Left lung (tissue), 14 donors: ENCODE measurements at regions of chr17 and their contacts with region 1.

Region 1: GRCh38 chr17:62692721-62693483 is 65.4 kb downstream of the MRC2 start:
- DNase-seq: peak in 1 of 4 donors; percentile 65
- ATAC-seq: peak; percentile 39
- H3K4me3 ChIP-seq: no peak overlapping the region
- H3K27ac ChIP-seq: no peak overlapping the region
- H3K4me1 ChIP-seq: peaks cover 0 to 10% of the 10 kb centered on the region in 2 donors
- H3K27me3 ChIP-seq: no peaks in the 10 kb centered on the region
- CTCF ChIP-seq: peak in 1 of 2 donors; percentile 24

Region 2: DNA sequence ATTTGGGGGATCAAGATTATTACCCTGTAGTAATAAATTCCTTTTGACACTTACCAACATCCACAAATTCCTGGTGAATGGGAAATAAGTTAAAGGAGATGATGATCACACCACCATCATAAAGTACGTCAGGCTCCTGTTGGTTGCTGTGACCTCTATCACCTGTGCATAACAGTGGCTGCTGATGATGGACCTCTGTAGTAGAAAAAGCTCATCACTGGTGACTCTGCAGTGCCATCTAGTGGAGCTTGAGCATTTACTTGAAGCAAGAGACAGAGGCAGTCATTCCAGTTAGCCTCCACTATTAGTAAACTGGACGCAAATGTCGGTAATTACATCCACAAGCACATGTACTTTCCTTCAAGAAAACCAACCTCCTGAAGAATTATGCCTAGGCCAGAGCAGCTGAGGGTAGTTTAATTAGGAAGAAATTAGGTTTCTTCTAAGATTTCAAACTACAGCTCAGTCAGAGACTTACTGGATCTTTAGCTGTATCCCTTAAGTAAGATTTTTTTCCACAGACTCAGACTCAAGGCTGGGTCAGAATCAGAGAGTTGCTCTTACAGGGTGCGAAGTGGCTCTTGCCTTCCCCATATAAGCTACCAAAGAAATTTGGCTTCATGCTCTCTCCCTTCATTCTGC is 713.9 kb after region 1 on chr17:
- intact Hi-C with region 1: loop called in 1 of 2 experiments (anchors 10 kb)
- DNase-seq: peak in 2 of 4 donors; percentile 79 to 89
- ATAC-seq: peak; percentile 93
- H3K4me3 ChIP-seq: no peak overlapping the region
- H3K27ac ChIP-seq: no peak overlapping the region
- H3K4me1 ChIP-seq: peaks cover 0 to 9% of the 10 kb centered on the region in 2 donors
- H3K27me3 ChIP-seq: no peaks in the 10 kb centered on the region
- CTCF ChIP-seq: peak; percentile 71 to 76